GM12878 (cell line): ENCODE measurements at regions of chr6 and their contacts with region 1.

Region 1: GRCh38 chr6:89297695-89298351 is 17.3 kb downstream of the GABRR2 start:
- DNase-seq: peak; percentile 80
- ATAC-seq: peak; percentile 87
- H3K4me3 ChIP-seq: peak overlapping the region; percentile 48; the same call in 1 of the 2 replicates
- H3K27ac ChIP-seq: peak overlapping the region; percentile 94
- H3K4me1 ChIP-seq: peaks cover 27% of the 10 kb centered on the region
- H3K27me3 ChIP-seq: no peaks in the 10 kb centered on the region
- CTCF ChIP-seq: no peak
- EP300 ChIP-seq: peak; percentile 87
- POLR2A ChIP-seq: no peak
- RAD21 ChIP-seq: no peak

Region 2: GRCh38 chr6:89281779-89282246 is 16.0 kb before region 1 on chr6:
- CTCF ChIA-PET with region 1: interaction called, 14 read pairs
- POLR2A ChIA-PET with region 1: interaction called, 8 read pairs
- RAD21 ChIA-PET with region 1: interaction called, 7 read pairs
- SMC1A ChIA-PET with region 1: interaction called, 5 read pairs
- in situ Hi-C with region 1: no loop called
- intact Hi-C with region 1: no loop called
- DNase-seq: no peak
- ATAC-seq: peak; percentile 99
- H3K4me3 ChIP-seq: no peak overlapping the region
- H3K27ac ChIP-seq: no peak overlapping the region
- H3K4me1 ChIP-seq: peaks cover 7% of the 10 kb centered on the region
- H3K27me3 ChIP-seq: no peaks in the 10 kb centered on the region
- CTCF ChIP-seq: peak; percentile 60 to 86 (median 79)
- EP300 ChIP-seq: no peak
- POLR2A ChIP-seq: no peak
- RAD21 ChIP-seq: peak; percentile 77

Region 3: GRCh38 chr6:89360415-89360999 is 62.7 kb after region 1 on chr6:
- CTCF ChIA-PET with region 1: interaction called, 32 read pairs
- POLR2A ChIA-PET with region 1: interaction called, 19 read pairs
- RAD21 ChIA-PET with region 1: interaction called, 28 read pairs
- SMC1A ChIA-PET with region 1: interaction called, 32 read pairs
- in situ Hi-C with region 1: no loop called
- intact Hi-C with region 1: no loop called
- DNase-seq: no peak
- ATAC-seq: peak; percentile 77
- H3K4me3 ChIP-seq: peak overlapping the region; percentile 10; the same call in 1 of the 2 replicates
- H3K27ac ChIP-seq: peak overlapping the region; percentile 90
- H3K4me1 ChIP-seq: peaks cover 64% of the 10 kb centered on the region
- H3K27me3 ChIP-seq: no peaks in the 10 kb centered on the region
- CTCF ChIP-seq: no peak
- EP300 ChIP-seq: peak; percentile 26 to 80; a peak in 2 of 4 replicates
- POLR2A ChIP-seq: no peak
- RAD21 ChIP-seq: no peak

Region 4: GRCh38 chr6:89596056-89596455 is 298.2 kb after region 1 on chr6:
- CTCF ChIA-PET with region 1: no interaction called
- POLR2A ChIA-PET with region 1: no interaction called
- RAD21 ChIA-PET with region 1: no interaction called
- SMC1A ChIA-PET with region 1: no interaction called
- in situ Hi-C with region 1: no loop called
- intact Hi-C with region 1: no loop called
- DNase-seq: peak; percentile 52
- ATAC-seq: peak; percentile 96
- H3K4me3 ChIP-seq: no peak overlapping the region
- H3K27ac ChIP-seq: peak overlapping the region; percentile 21; the same call in 1 of the 2 replicates
- H3K4me1 ChIP-seq: peaks cover 17% of the 10 kb centered on the region
- H3K27me3 ChIP-seq: no peaks in the 10 kb centered on the region
- CTCF ChIP-seq: no peak
- EP300 ChIP-seq: no peak
- POLR2A ChIP-seq: no peak
- RAD21 ChIP-seq: no peak